MCF 10A (cell line): ENCODE measurements at regions of chr6 and their contacts with region 1.

Region 1: GRCh38 chr6:37381579-37381978 is 27.8 kb downstream of the RNF8 start:
- DNase-seq: peak; percentile 64
- H3K4me3 Mint-ChIP-seq: no peak overlapping the region
- H3K27ac Mint-ChIP-seq: no peak overlapping the region
- H3K4me1 Mint-ChIP-seq: no peaks in the 10 kb centered on the region
- H3K27me3 Mint-ChIP-seq: no peaks in the 10 kb centered on the region
- CTCF ChIP-seq: peak; percentile 49

Region 2: GRCh38 chr6:37239950-37240713 is 141.4 kb before region 1 on chr6:
- CTCF ChIA-PET with region 1: no interaction called
- POLR2A ChIA-PET with region 1: no interaction called
- intact Hi-C with region 1: no loop called
- DNase-seq: peak; percentile 95
- H3K4me3 Mint-ChIP-seq: no peak overlapping the region
- H3K27ac Mint-ChIP-seq: peak overlapping the region; percentile 89
- H3K4me1 Mint-ChIP-seq: peaks cover 47% of the 10 kb centered on the region
- H3K27me3 Mint-ChIP-seq: no peaks in the 10 kb centered on the region
- CTCF ChIP-seq: no peak

Region 3: DNA sequence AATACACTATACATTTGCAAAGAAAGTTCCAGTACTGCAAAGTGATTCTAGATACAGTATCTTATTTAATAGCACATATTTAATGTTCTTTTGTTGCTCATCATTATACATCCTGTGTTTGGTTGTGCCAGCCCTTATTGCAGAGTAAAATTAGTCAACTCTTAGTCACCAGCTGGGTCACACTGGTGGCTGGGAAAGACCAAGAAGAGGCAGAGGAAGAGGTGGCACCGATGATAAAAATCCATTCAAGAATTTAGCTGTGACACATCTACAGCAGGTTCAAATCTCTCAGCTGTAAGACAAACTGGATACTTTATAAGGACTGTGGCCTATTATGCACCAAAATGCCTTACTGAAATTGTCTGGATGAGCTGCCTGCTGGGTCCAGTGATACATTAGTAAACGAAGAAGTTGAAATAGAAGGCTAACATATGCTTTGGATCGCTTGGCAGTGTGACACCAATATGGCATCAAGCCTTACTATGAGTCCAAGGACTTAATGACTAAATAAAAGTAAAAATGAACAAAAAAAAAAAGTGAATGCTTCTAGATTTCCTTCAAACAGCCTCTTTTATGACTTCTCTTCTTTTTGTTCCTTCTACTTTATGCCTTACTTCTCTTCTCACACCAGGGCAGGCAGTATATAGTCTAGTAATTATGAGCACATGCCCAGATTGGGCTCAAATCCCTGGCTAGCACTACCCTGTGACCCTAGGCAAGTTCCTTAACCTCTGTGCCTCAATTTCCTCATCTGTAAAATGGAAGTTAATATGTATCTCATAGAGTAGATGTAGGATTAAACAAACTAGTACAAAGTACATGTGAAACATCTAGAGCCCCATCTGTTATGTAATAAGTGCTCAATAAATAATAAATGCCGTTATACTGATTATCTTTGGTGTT is 57.2 kb before region 1 on chr6:
- CTCF ChIA-PET with region 1: interaction called, 4 read pairs
- POLR2A ChIA-PET with region 1: no interaction called
- intact Hi-C with region 1: loop called (anchors 2 kb)
- DNase-seq: peak; percentile 47
- H3K4me3 Mint-ChIP-seq: no peak overlapping the region
- H3K27ac Mint-ChIP-seq: no peak overlapping the region
- H3K4me1 Mint-ChIP-seq: peaks cover 11% of the 10 kb centered on the region
- H3K27me3 Mint-ChIP-seq: no peaks in the 10 kb centered on the region
- CTCF ChIP-seq: no peak

Region 4: DNA sequence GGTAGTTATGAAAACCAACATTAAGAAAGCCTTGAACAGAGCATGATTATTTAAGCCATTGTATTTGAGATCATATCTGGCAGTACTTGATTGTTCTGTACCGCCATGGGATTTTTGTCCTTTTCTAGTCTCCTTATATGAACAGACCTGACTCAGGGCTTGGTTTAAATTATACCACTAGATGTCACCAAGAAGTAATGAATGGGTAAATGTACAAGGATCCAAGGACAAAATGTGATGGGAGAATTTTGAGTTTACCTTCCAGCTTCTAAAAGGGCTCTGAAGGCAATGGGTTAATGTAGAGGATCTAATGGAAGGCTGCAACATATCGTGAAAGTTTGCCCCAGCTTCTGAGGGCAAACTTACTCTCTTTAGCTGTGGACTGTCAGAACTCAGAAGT is 15.8 kb before region 1 on chr6:
- CTCF ChIA-PET with region 1: interaction called, 21 read pairs
- POLR2A ChIA-PET with region 1: no interaction called
- intact Hi-C with region 1: no loop called
- DNase-seq: peak; percentile 11
- H3K4me3 Mint-ChIP-seq: no peak overlapping the region
- H3K27ac Mint-ChIP-seq: no peak overlapping the region
- H3K4me1 Mint-ChIP-seq: peaks cover 10% of the 10 kb centered on the region
- H3K27me3 Mint-ChIP-seq: no peaks in the 10 kb centered on the region
- CTCF ChIP-seq: no peak

Region 5: DNA sequence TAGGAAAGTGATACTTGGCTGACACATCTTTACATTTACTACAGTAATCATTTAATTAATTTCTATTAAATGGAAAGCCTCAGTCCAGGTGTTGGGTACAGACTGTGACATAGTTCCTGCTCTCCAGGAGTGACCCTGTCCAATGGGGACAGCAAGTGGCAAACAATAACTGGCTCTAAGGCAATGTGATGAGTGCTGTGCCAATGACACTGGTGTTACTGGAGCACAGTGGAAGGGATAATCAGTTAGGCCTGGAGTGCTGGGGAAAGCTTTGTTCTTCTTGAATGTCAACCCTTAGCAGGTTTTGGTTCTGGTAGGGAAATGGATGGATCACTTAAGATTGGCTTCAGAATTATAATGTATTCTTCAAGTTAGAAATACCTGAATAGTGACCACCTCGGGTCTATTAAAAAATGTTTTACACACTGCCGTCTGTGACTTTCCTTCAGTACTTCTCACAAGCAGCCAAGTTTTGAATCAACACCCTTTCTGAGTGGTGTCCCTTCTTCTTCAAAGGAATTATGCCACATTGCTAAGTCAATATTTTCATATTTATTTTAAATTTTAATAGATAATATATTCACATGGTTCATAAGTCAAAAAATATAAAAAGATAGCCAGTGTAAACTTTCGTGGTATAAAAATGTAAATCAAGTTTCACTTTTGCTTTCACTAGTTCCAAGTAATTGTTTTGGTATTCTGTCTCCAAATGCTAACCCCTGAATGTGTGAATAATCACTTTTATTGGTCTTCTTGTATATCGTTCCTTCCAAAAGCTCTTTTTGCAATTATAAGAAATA is 61.0 kb after region 1 on chr6:
- CTCF ChIA-PET with region 1: interaction called, 12 read pairs
- POLR2A ChIA-PET with region 1: no interaction called
- intact Hi-C with region 1: no loop called
- DNase-seq: no peak
- H3K4me3 Mint-ChIP-seq: no peak overlapping the region
- H3K27ac Mint-ChIP-seq: no peak overlapping the region
- H3K4me1 Mint-ChIP-seq: no peaks in the 10 kb centered on the region
- H3K27me3 Mint-ChIP-seq: no peaks in the 10 kb centered on the region
- CTCF ChIP-seq: no peak

Region 6: GRCh38 chr6:37473397-37474095 is 92.0 kb after region 1 on chr6:
- CTCF ChIA-PET with region 1: interaction called, 15 read pairs
- POLR2A ChIA-PET with region 1: interaction called, 3 read pairs
- intact Hi-C with region 1: no loop called
- DNase-seq: peak; percentile 96
- H3K4me3 Mint-ChIP-seq: no peak overlapping the region
- H3K27ac Mint-ChIP-seq: no peak overlapping the region
- H3K4me1 Mint-ChIP-seq: peaks cover 20% of the 10 kb centered on the region
- H3K27me3 Mint-ChIP-seq: no peaks in the 10 kb centered on the region
- CTCF ChIP-seq: no peak